Posterior vena cava (tissue), 2 donors: ENCODE measurements at regions of chr7 and their contacts with region 1.

Region 1: GRCh38 chr7:140326116-140326928 is 72.0 kb downstream of the SLC37A3 start:
- DNase-seq: peak; percentile 86

Region 2: DNA sequence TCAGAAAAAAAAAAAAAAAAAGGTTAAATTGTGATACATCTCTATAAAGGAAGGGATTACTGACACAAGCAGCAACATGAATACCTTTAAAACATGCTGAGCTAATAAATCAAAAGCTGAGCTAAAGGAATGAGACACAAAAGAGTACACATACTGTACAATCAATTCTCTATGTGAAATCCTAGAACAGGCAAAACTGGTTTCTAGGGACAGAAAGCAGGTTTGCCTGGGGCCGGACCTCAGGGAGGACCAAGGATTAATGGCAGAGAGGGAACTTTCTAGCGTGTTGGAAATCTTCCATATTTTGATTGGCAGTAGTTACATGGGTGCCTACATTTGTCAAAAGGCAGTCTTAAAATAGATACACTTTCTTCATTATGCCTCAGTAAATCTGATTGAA is 895.3 kb before region 1 on chr7:
- intact Hi-C with region 1: no loop called
- DNase-seq: no peak

Region 3: GRCh38 chr7:140175221-140176121 is 150.9 kb before region 1 on chr7:
- intact Hi-C with region 1: loop called (anchors 10 kb)
- DNase-seq: peak; percentile 98